GM10248 (cell line): ENCODE measurements at regions of chr6 and their contacts with region 1.

Region 1: DNA sequence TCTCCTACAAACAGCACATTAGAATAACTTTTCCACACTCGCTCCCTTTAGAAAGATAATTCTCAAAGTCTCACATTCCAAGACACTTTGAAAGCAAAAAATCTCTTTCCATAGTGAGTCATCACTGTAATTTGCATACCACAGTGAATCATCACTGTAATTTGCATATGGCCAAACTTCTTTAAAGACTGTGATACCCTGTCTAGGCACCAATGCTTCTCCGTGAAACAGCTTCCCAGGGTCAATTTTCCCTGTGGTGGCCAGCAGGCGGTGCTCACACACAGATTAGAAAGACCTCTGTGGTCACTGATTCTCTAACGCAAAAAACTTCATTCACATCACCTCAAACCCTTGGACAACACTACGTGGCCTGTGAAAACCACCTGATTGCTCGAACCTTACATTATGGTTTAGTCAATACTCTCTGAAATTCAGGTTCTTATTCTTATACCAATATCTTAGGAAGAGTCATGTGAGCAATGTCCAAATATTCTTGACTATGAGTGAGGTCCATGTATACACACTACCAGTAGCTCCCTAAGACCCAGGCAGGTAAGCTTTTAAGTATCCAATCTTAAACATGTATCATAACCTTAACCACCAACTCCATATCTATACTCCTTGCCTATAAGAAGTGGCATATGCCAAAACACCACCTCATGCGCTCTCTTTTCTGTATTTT is 78.5 kb upstream of the PHACTR1 start:
- DNase-seq: peak; percentile 27
- CTCF ChIP-seq: peak; percentile 71

Region 2: DNA sequence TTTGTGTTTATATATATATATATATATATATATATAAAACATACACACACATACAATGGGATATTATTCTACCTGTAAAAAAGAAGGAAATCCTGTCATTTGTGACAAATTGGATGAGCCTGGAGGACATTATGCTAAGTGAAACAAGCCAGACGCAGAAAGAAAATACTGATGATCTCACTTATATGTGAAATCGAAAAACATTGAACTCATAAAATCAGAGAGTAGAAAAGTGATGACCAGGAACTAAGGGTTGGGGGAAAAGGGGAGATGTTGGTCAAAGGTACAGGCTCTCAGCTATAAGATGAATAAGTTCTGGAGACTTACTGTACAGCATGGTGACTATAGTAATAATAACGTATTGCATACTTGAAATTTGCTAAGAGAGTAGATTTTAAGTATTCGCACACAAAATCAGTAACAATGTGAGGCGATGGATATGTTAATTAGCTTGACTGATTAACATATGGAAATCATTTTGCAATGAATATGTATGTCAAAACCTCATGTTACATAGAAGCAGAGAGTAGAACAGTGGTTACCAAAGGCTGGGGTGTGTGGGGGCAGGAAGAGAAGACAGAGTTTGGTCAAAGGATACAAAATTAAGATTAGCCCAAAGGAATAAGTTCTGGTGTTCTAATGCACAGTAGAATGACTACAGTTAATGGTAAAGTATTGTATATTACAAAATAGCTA is 13.8 kb before region 1 on chr6:
- CTCF ChIA-PET with region 1: interaction called, 10 read pairs
- POLR2A ChIA-PET with region 1: no interaction called
- DNase-seq: no peak
- CTCF ChIP-seq: no peak

Region 3: GRCh38 chr6:12875051-12875450 is 236.9 kb after region 1 on chr6:
- CTCF ChIA-PET with region 1: no interaction called
- POLR2A ChIA-PET with region 1: no interaction called
- DNase-seq: no peak
- CTCF ChIP-seq: no peak